Posterior cingulate gyrus (tissue), 11 donors: ENCODE measurements at regions of chr7 and their contacts with region 1.

Region 1: GRCh38 chr7:123865517-123866117 is 20.6 kb downstream of the HYAL4 start:
- DNase-seq: peak in 4 of 10 donors; percentile 16 to 55 (median 32)

Region 2: DNA sequence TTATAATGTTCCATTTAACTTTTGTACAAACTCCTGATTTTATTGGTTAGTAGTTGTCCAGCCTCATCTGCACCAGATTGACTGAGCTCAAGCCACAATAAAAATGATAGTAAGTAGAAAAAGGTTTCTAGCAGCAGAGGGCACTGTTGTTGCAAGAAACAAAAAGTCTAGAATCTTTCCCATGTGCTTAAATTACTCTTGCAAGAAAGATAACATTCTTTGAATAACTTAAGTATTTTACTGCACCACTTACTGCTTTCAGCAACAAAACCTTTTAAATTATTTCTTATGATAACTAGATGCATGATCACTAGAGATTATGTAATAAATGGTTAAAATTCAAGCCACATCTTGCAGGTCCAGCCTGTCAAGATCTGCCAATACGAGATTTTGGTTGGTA is 182.9 kb before region 1 on chr7:
- intact Hi-C with region 1: loop called (anchors 5 kb)
- DNase-seq: no peak

Region 3: DNA sequence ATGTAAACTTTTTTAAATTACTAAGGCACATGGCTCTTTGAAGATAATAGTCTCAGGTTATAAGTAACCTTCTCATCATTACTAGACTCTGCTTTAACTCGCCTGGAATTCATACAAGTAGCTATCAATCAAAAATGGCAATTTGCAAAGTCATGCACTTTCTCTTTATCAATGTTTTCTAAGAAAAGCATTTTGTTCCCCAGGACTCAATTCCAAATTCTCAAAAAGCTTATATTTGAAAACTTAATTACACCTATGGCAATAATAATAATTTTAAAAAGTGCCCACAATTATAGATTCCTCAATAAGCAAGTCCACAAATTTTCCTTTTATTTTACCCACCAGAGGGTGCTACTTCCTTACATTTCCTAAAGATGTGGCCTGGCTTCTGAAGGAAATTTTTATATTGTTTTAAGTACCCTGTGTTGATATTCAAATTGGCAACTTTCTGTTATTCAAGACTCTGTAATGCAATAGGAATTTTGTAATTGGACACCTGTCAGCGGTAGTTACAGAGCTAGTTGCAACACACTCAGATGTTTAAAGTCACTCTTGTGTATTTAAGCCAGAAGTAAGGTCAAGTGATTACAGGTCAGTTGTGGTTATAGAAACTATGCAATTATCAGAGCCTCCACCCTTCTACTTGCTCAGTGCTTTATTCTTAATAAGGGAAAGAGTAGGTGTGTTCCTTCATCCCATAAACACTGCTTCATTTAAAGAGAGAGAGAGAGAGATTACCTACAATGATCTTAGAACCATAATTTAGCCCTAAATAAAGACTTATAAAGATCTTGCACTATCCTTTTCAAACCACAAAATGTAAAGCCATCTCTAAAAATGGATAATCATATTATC is 67.7 kb before region 1 on chr7:
- intact Hi-C with region 1: loop called (anchors 2 kb)
- DNase-seq: no peak

Region 4: GRCh38 chr7:123916240-123916724 is 50.7 kb after region 1 on chr7:
- intact Hi-C with region 1: no loop called
- DNase-seq: no peak